ENCODE measurements at regions of chr7 and their contacts with region 1.

Region 1: GRCh38 chr7:134121632-134122139 is 5.5 kb upstream of the LRGUK start:
- DNase-seq: no peak
- H3K4me3 Mint-ChIP-seq: no peak overlapping the region
- H3K27ac Mint-ChIP-seq: no peak overlapping the region
- H3K4me1 Mint-ChIP-seq: no peaks in the 10 kb centered on the region
- H3K27me3 Mint-ChIP-seq: peaks cover 38% of the 10 kb centered on the region
- CTCF ChIP-seq: no peak

Region 2: GRCh38 chr7:134098072-134098471 is 23.6 kb before region 1 on chr7:
- CTCF ChIA-PET with region 1: interaction called, 4 read pairs
- POLR2A ChIA-PET with region 1: no interaction called
- intact Hi-C with region 1: loop called (anchors 2 kb)
- DNase-seq: no peak
- H3K4me3 Mint-ChIP-seq: no peak overlapping the region
- H3K27ac Mint-ChIP-seq: no peak overlapping the region
- H3K4me1 Mint-ChIP-seq: no peaks in the 10 kb centered on the region
- H3K27me3 Mint-ChIP-seq: peaks cover 10% of the 10 kb centered on the region
- CTCF ChIP-seq: no peak

Measured in MCF 10A (cell line).